B cell (primary cell): ENCODE measurements at regions of chr17 and their contacts with region 1.

Region 1: GRCh38 chr17:68291844-68292695 is 775 bp downstream of the ARSG start:
- DNase-seq: peak; percentile 97
- ATAC-seq: peak; percentile 78
- H3K4me3 ChIP-seq: peak overlapping the region; percentile 47 to 74 (median 61)
- H3K4me3 Mint-ChIP-seq: peak overlapping the region; percentile 95
- H3K27ac ChIP-seq: peak overlapping the region; percentile 86 to 89
- H3K27ac Mint-ChIP-seq: peak overlapping the region; percentile 94
- H3K4me1 ChIP-seq: peaks cover 31 to 43% of the 10 kb centered on the region in 2 donors
- H3K4me1 Mint-ChIP-seq: peaks cover 46% of the 10 kb centered on the region
- H3K27me3 ChIP-seq: no peaks in the 10 kb centered on the region
- H3K27me3 Mint-ChIP-seq: no peaks in the 10 kb centered on the region
- CTCF ChIP-seq: no peak

Region 2: DNA sequence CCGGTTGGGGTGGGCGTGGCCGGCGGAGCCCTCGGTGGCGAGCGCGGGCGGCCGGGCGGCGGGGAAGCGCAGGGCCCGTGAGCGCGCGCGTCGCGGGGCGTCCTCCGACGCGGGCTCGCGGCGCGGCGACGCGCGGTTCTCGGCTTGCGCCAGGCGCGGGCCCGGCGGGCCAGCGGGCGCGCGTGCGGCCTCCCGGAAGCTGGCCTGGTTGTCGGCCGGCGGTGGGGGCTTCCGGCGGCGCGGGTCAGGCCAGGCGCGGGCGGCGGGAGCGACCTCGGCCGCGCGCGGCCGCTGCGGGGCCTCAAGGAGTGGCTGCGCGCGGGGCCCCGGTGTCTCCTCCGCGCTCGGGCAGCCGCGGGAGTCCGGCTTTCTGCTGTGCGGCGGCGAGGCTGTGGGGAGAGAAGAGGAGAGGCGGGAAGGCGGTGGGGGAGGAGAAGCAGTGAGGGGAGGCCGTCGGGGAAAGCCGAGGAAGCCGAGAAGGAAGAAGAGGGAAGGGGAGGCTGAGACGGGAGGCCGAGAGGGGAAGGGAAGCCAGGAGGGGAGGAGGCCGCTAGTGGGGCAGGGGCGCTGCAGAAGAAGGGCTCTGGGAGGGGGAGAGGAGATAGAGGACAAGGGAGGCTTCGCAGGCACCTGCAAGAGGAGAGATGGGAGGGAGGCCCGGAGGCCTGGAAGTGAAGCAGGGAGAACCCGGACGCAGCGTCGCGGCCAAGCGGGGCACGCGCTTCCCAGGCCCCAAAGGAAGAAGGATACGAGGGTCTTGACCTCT is 298.3 kb before region 1 on chr17:
- CTCF ChIA-PET with region 1: no interaction called
- POLR2A ChIA-PET with region 1: no interaction called
- intact Hi-C with region 1: loop called (anchors 2 kb)
- DNase-seq: no peak
- ATAC-seq: peak; percentile 81
- H3K4me3 ChIP-seq: peak overlapping the region in 4 of 5 experiments; percentile 68 to 71 (median 70)
- H3K4me3 Mint-ChIP-seq: peak overlapping the region; percentile 85
- H3K27ac ChIP-seq: peak overlapping the region; percentile 50 to 72
- H3K27ac Mint-ChIP-seq: peak overlapping the region; percentile 82
- H3K4me1 ChIP-seq: peaks cover 30 to 34% of the 10 kb centered on the region in 2 donors
- H3K4me1 Mint-ChIP-seq: peaks cover 33% of the 10 kb centered on the region
- H3K27me3 ChIP-seq: peaks cover 0 to 21% (median 8%) of the 10 kb centered on the region in 4 experiments
- H3K27me3 Mint-ChIP-seq: peaks cover 20% of the 10 kb centered on the region
- CTCF ChIP-seq: no peak

Region 3: DNA sequence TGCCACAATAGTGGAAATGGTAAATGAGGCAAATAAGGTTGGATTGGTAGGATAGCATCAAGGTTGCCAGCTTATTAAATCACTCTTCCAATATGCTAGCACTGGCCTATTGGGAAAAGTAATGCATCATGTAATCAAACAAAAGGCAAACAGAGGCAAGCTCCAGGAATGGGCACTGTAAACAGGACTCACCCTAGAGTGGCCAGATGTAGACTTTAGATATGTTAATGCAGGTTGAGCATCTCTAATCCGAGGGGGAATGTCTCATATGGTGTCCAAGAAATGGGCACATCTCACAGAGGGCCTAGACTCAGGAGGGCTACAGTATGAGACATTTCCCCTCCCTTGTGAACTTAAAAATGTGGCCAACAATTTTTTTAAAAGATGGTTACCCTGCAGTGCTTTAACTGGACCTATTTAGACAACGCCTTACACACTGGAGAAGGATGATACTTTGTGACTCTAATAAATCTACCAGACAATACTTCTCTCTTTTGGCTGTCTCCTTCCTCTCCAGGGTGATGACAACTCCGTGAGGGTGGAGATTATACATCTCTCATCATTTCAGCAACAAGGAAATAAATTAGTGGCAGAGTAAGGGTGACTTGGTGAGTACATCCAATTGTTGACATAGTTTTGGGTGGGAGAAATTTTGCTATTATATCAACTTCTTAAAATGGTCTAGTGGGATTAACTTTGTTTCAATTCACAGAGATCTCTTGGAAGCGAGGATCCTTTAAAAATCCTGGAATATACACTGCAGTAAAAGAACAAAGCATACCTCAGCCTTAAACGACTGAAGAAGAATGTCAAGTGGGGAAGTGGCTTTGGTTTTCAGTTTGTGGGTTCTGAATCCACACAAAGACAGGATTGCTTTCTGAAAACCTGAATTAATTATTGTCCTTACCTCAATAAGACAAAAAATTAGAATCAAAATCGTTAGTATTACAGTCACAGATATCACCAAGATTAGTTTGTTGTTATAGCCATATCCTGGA is 166.9 kb before region 1 on chr17:
- CTCF ChIA-PET with region 1: no interaction called
- POLR2A ChIA-PET with region 1: no interaction called
- intact Hi-C with region 1: no loop called
- DNase-seq: no peak
- ATAC-seq: no peak
- H3K4me3 ChIP-seq: no peak overlapping the region
- H3K4me3 Mint-ChIP-seq: no peak overlapping the region
- H3K27ac ChIP-seq: no peak overlapping the region
- H3K27ac Mint-ChIP-seq: no peak overlapping the region
- H3K4me1 ChIP-seq: no peaks in the 10 kb centered on the region
- H3K4me1 Mint-ChIP-seq: no peaks in the 10 kb centered on the region
- H3K27me3 ChIP-seq: no peaks in the 10 kb centered on the region
- H3K27me3 Mint-ChIP-seq: no peaks in the 10 kb centered on the region
- CTCF ChIP-seq: no peak

Region 4: DNA sequence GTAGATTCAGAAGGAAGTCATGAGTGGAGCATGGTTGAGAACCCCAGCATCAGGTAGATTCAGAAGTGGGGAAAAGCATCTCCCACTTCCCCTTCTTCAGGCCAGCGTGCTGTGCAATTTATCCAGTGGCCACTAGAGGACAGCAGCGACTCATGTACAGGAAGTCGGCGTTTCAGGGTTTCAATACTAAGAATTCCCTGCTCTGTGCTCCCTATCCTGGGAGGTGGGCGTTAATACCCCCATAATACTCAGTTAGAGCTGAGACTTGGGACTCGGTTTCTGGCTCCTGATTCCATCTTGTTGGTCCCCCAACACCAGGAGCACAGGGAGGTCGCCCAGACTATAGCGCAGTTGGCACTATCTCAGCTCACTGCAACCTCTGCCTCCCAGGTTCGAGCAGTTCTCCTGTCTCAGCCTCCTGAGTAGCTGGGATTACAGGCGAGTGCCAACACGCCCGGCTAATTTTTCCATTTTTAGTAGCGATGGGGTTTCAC is 119.6 kb before region 1 on chr17:
- CTCF ChIA-PET with region 1: interaction called, 3 read pairs
- POLR2A ChIA-PET with region 1: no interaction called
- intact Hi-C with region 1: loop called (anchors 2 kb)
- DNase-seq: peak; percentile 87
- ATAC-seq: peak; percentile 94
- H3K4me3 ChIP-seq: no peak overlapping the region
- H3K4me3 Mint-ChIP-seq: no peak overlapping the region
- H3K27ac ChIP-seq: no peak overlapping the region
- H3K27ac Mint-ChIP-seq: no peak overlapping the region
- H3K4me1 ChIP-seq: peaks cover 0 to 9% of the 10 kb centered on the region in 2 donors
- H3K4me1 Mint-ChIP-seq: peaks cover 3% of the 10 kb centered on the region
- H3K27me3 ChIP-seq: no peaks in the 10 kb centered on the region
- H3K27me3 Mint-ChIP-seq: no peaks in the 10 kb centered on the region
- CTCF ChIP-seq: peak; percentile 99

Region 5: DNA sequence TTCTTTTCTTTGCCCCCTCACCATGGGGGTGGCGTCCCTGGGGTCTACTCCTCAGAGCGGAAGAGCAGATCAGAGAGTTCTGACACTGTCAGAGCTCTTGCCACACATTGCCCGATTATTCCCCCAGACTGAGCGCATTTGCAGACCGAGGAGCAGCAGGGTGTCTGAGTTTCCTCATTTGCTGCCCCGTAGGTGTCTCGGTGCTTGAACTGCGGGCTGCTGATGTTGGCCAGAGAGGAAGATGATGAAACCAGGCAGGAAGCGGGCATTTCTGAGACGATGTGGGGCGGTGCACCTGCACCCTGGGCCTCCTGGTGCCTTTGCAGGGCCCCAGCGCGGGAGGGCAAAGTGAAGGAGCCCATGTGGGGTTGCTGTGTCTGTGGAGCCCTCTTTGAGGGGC is 54.4 kb after region 1 on chr17:
- CTCF ChIA-PET with region 1: no interaction called
- POLR2A ChIA-PET with region 1: interaction called, 7 read pairs
- intact Hi-C with region 1: loop called (anchors 2 kb)
- DNase-seq: peak; percentile 84
- ATAC-seq: peak; percentile 94
- H3K4me3 ChIP-seq: peak overlapping the region in 3 of 5 experiments; percentile 31 to 52 (median 33)
- H3K4me3 Mint-ChIP-seq: peak overlapping the region; percentile 89
- H3K27ac ChIP-seq: peak overlapping the region; percentile 51 to 52
- H3K27ac Mint-ChIP-seq: peak overlapping the region; percentile 95
- H3K4me1 ChIP-seq: peaks cover 25 to 28% of the 10 kb centered on the region in 2 donors
- H3K4me1 Mint-ChIP-seq: peaks cover 31% of the 10 kb centered on the region
- H3K27me3 ChIP-seq: peaks cover 0 to 8% (median 0%) of the 10 kb centered on the region in 4 experiments
- H3K27me3 Mint-ChIP-seq: peaks cover 6% of the 10 kb centered on the region
- CTCF ChIP-seq: no peak

Region 6: DNA sequence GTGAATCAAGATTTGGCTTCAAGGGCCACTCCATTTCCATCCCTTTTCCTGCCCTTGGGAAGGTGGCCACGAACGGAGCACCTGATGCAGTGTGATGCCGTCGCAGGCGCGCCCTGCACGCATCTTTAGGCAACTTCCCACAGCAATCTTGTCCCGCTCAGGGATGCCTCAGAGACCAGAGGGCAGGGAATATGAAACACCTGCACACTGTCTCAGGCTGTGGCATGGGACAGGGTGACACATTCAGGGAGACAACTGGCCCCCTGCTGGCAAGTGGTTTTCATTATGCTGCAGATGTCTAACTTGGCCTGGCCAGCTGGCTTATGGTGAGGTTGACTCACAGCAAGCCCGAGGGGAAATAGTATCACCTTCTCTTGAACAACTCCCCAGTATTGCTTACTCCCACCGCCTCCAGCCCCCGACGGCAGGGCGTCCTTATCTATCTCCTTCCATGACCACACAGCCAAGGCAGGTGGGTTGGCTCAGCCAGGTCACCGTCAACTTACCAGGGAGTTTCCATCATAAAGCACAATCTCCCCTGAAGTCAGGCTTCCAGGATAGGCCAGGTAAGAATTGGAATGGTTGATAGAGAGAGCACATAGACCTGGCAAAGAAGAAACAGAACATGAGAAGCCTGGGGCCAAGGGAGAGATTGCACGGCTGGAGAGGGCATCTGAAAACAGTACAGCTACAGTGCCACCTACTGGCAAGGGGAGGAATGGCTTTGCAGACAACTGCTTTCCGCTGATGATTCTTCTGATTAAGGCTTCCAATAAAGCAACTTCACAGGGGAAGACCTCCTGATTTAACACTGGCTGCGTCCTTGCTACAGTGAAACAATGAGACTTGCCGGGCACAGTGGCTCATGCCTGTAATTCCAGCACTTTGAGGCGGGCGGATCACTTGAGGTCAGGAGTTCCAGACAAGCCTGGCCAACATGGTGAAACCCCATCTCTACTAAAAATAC is 144.1 kb after region 1 on chr17:
- CTCF ChIA-PET with region 1: interaction called, 5 read pairs
- POLR2A ChIA-PET with region 1: no interaction called
- intact Hi-C with region 1: loop called (anchors 10 kb)
- DNase-seq: peak; percentile 86
- ATAC-seq: peak; percentile 74
- H3K4me3 ChIP-seq: no peak overlapping the region
- H3K4me3 Mint-ChIP-seq: peak overlapping the region; percentile 63
- H3K27ac ChIP-seq: no peak overlapping the region
- H3K27ac Mint-ChIP-seq: peak overlapping the region; percentile 13
- H3K4me1 ChIP-seq: peaks cover 39 to 40% of the 10 kb centered on the region in 2 donors
- H3K4me1 Mint-ChIP-seq: peaks cover 50% of the 10 kb centered on the region
- H3K27me3 ChIP-seq: no peaks in the 10 kb centered on the region
- H3K27me3 Mint-ChIP-seq: no peaks in the 10 kb centered on the region
- CTCF ChIP-seq: peak; percentile 85

Region 7: DNA sequence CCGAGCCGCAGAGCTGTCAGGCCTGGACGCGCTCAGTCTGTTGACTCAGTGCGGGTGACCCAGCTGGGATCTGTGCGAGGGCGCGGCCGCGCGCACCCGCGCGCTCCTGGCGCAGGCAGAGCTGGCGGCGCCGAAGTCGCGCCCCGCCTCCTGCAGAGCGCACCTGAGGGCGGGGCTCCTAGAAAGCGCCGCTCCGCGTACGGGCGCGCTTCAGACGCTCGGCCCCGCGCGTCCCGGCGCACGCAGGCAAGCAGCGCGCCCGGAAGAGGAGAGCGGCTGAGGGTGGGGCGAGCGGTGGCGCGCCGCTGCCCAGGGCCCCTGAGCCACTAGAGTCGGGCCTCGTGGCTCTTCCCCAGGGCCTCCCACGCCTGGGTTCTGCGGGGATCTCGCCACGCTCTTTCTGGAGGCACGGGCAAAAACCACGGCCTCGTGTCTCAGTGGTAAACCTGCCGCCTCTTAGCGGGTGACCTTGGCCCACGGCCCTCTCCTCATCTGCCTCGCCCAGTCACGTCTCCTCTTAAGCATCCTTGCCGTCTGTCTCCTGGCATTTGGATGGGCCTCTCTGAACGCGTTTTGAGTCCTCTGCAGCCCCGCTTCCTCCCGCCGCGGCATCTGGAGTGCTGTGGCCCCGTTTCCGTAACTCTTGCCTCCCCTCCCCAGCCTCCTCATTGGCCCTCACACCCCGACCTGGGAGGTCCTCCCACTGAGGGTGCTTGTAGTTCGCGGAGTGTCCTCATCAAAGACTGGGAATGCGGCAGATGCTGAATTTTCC is 1035.2 kb after region 1 on chr17 and contains the start of gene ABCA5:
- CTCF ChIA-PET with region 1: no interaction called
- POLR2A ChIA-PET with region 1: no interaction called
- intact Hi-C with region 1: loop called (anchors 5 kb)
- DNase-seq: peak; percentile 95
- ATAC-seq: peak; percentile 93
- H3K4me3 ChIP-seq: peak within 1 kb of the TSS; percentile 39 to 88 (median 80)
- H3K4me3 Mint-ChIP-seq: peak within 1 kb of the TSS; percentile 96
- H3K27ac ChIP-seq: peak within 1 kb of the TSS; percentile 86 to 90
- H3K27ac Mint-ChIP-seq: peak within 1 kb of the TSS; percentile 98
- H3K4me1 ChIP-seq: peaks cover 7 to 12% of the 10 kb centered on the region in 2 donors
- H3K4me1 Mint-ChIP-seq: peaks cover 17% of the 10 kb centered on the region
- H3K27me3 ChIP-seq: peaks cover 0 to 11% (median 1%) of the 10 kb centered on the region in 4 experiments
- H3K27me3 Mint-ChIP-seq: peaks cover 12% of the 10 kb centered on the region
- CTCF ChIP-seq: no peak
- total RNA-seq, gene ABCA5: 37.2 and 37.8 TPM in 2 replicates